ENCODE measurements at regions of chr11 and their contacts with region 1.

Region 1: DNA sequence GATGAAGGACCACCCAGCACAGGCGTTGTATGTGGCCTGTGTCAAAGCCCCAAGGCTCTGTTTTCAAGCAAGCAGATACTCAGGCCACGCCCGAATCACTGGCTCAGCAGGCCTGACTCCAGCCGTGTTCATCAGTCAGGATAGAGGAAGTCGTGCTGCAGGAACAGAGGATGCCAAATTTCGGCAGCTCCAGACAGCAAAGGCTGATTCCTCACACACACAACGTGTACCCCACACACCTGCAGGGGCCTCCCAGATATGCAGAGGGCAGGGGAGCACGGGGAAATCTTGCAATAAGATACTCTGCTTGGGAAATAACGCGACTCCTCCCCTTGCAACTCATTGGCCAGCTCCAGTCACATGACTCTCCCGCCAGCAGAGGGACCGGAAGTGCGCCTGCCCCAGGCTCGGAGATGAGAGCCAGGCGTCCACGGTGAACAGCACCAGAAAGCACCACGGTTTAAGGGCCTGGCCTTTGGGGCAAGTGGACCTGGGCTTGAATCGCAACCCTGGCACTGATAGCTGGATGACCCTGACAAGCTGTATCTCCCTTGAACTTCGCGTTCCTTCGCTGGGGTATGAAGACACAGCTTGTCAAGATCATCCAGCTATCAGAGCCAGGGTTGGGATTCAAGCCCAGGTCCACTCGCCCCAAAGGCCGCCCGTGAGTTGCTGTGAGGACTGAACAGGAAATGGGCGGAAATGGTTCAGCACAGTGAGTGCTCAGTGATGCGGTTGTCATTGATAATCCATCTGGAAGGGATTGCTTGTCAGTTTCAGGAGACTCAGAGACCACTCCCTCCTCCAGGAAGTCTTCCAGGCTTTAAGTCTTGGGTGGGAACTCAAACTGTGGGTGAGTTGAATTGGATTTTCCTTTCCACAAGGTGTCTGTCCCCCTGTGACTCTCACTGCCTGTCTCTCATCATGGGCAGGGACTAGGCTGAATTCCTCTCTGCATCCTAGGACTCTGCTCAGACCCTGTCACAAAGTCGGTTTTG is 88.5 kb downstream of the MYEOV start:
- DNase-seq: no peak
- H3K4me3 ChIP-seq: no peak overlapping the region
- H3K27ac ChIP-seq: no peak overlapping the region
- H3K4me1 ChIP-seq: peaks cover 8% of the 10 kb centered on the region
- H3K27me3 ChIP-seq: no peaks in the 10 kb centered on the region
- CTCF ChIP-seq: no peak

Region 2: DNA sequence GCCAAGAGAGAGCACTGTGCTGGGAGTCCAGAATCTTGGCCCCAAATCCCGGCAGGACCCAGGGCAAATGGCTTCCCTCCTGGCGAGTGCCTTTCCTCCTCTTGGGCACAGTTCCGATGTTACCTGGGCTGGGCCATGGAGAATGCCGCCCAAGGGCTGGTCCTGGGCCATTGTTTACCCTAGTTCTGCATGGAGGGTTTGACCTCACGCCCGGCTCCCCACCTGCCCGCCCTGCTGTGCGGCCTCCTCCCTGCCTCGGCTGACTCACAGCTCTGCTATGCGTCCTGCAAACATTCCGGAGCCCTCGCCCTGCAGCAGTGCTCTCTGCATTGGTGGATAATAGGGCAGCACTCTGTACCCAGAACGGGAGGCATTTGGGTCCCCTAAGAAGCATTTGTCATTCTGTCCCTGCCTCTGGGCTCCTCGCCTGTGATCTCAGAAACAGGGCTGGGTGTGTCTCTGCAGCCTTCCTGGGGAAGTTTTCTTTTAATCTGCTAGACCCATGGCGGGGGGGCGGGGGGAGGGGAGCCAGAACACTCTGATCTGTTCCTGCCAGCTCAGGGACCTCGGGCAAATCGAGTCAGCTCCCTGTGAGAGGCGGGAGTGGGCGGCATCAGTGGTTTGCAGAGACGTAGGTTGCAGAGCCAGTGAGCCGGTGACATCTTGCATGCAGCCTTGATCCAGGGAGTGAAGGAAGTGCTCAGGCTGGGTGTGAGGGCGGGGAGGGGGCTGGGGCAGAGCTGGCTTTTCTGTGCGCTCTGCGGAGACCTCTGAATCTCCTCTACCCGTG is 259.6 kb before region 1 on chr11:
- CTCF ChIA-PET with region 1: no interaction called
- dilution Hi-C with region 1: no loop called
- in situ Hi-C with region 1: no loop called
- intact Hi-C with region 1: no loop called
- DNase-seq: peak; percentile 85
- H3K4me3 ChIP-seq: peak overlapping the region in 2 of 3 experiments; percentile 9 to 15
- H3K27ac ChIP-seq: peak overlapping the region; percentile 53
- H3K4me1 ChIP-seq: peaks cover 33% of the 10 kb centered on the region
- H3K27me3 ChIP-seq: no peaks in the 10 kb centered on the region
- CTCF ChIP-seq: no peak

Region 3: DNA sequence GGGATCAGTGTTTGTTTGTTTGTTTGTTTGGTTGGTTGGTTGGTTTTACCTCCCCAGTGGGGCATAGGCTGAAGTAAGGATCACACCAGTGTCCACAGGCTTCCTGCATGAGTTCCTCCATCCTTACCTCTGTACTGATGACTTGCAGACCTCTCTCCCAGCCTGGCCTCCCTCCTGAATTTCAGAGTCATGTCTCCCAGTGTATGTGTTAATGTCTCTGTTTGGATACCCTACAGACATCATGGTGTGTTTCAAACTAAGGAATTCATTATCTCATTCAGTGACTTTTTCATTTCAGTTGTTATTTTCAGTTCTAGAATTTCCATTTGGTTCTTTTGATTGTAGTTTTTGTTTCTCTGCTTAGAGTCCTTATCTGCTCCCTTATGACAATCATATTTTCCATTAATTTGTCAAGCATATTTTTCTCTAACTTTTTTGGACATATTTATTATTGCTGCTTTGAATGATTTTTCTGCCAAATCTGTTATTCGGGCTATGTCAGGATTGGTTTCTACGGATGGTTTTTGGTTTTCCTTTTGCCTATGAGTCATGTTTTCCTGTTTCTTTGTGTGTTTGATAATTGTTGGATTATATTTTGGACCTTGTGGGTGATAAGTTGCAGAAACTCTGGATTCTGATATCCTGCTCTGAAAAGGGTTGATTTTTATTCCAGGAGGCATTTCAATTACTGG is 64.9 kb before region 1 on chr11:
- CTCF ChIA-PET with region 1: no interaction called
- dilution Hi-C with region 1: loop called (anchors 5 kb)
- in situ Hi-C with region 1: no loop called
- intact Hi-C with region 1: no loop called
- DNase-seq: no peak
- H3K4me3 ChIP-seq: no peak overlapping the region
- H3K27ac ChIP-seq: no peak overlapping the region
- H3K4me1 ChIP-seq: peaks cover 33% of the 10 kb centered on the region
- H3K27me3 ChIP-seq: no peaks in the 10 kb centered on the region
- CTCF ChIP-seq: no peak

Region 4: DNA sequence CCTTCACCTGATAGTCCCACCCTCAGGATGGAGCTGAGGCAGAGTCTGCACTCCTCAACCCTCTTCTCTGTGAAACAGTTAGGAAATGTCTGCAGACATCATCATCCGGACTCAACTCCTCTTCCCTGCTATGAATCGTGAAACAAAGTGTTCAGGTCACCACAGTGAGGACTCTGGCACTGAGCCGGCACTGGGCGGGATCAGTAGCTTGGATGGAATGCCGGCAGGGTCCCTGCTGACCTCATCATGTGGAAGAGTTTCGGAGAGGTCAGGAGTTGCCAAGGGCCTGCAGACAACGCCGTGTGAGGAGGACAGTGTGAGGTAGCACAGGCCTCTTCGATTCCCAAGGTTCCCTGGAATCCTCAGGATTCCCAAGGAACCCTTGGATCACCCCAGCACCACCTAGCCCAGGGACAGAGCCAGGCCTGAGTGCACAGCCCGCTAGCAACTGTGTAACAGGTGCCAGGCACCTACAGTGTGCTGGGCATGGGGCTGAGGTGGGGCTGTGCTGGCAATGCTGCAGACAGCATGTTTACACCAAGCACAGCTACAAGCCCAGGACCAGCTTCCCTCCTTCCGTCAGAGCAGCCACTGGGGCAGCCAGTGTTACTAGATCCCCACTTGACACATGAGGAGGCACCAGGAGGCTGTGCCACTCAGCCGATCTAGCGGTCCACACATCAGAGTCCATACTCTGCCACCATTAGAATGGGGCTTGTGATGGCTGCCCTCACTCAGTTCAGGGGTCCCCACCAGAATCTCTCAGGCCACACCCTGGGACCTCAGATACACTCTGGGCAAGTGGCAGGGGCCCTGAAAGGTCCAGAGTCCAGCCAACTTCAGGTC is 98.3 kb after region 1 on chr11:
- CTCF ChIA-PET with region 1: no interaction called
- dilution Hi-C with region 1: no loop called
- in situ Hi-C with region 1: no loop called
- intact Hi-C with region 1: no loop called
- DNase-seq: no peak
- H3K4me3 ChIP-seq: no peak overlapping the region
- H3K27ac ChIP-seq: no peak overlapping the region
- H3K4me1 ChIP-seq: peaks cover 5% of the 10 kb centered on the region
- H3K27me3 ChIP-seq: no peaks in the 10 kb centered on the region
- CTCF ChIP-seq: no peak